ENCODE measurements at regions of chr2 and their contacts with region 1.

Region 1: GRCh38 chr2:182650704-182651103 is 65.4 kb upstream of the DNAJC10 start:
- DNase-seq: no peak
- H3K4me3 ChIP-seq: no peak overlapping the region
- H3K27ac ChIP-seq: no peak overlapping the region
- H3K4me1 ChIP-seq: no peaks in the 10 kb centered on the region
- H3K27me3 ChIP-seq: no peaks in the 10 kb centered on the region
- CTCF ChIP-seq: peak; percentile 37

Region 2: GRCh38 chr2:182186132-182186735 is 464.5 kb before region 1 on chr2:
- intact Hi-C with region 1: loop called (anchors 2 kb)
- DNase-seq: no peak
- H3K4me3 ChIP-seq: no peak overlapping the region
- H3K27ac ChIP-seq: no peak overlapping the region
- H3K4me1 ChIP-seq: no peaks in the 10 kb centered on the region
- H3K27me3 ChIP-seq: no peaks in the 10 kb centered on the region
- CTCF ChIP-seq: peak; percentile 80

Region 3: GRCh38 chr2:182240862-182241371 is 409.8 kb before region 1 on chr2:
- intact Hi-C with region 1: loop called (anchors 5 kb)
- DNase-seq: peak; percentile 55
- H3K4me3 ChIP-seq: no peak overlapping the region
- H3K27ac ChIP-seq: no peak overlapping the region
- H3K4me1 ChIP-seq: no peaks in the 10 kb centered on the region
- H3K27me3 ChIP-seq: no peaks in the 10 kb centered on the region
- CTCF ChIP-seq: peak; percentile 31

Region 4: GRCh38 chr2:182245963-182246362 is 404.7 kb before region 1 on chr2:
- intact Hi-C with region 1: loop called (anchors 5 kb)
- DNase-seq: no peak
- H3K4me3 ChIP-seq: no peak overlapping the region
- H3K27ac ChIP-seq: no peak overlapping the region
- H3K4me1 ChIP-seq: no peaks in the 10 kb centered on the region
- H3K27me3 ChIP-seq: no peaks in the 10 kb centered on the region
- CTCF ChIP-seq: no peak

Region 5: DNA sequence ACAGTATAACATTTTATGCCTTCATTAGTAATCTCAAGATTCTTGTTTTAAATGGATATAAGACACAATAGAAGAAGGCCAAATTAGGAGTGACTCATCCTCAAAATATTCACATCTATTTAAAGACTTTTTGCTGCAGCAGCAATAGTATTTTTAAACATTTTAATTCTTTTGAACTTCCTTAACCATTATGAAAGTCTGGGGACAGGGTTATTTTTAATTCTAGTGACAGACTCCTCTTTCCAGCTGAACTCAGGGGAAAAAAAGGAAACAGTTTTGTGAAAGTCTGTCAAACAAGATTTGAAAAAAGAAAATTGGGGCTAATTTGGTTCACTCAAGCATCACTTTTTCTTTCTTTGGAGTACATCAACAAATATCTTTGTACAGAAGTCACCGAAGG is 1015.3 kb after region 1 on chr2:
- intact Hi-C with region 1: no loop called
- DNase-seq: no peak
- H3K4me3 ChIP-seq: no peak overlapping the region
- H3K27ac ChIP-seq: no peak overlapping the region
- H3K4me1 ChIP-seq: no peaks in the 10 kb centered on the region
- H3K27me3 ChIP-seq: no peaks in the 10 kb centered on the region
- CTCF ChIP-seq: no peak